ENCODE measurements at regions of chr17 and their contacts with region 1.

Region 1: DNA sequence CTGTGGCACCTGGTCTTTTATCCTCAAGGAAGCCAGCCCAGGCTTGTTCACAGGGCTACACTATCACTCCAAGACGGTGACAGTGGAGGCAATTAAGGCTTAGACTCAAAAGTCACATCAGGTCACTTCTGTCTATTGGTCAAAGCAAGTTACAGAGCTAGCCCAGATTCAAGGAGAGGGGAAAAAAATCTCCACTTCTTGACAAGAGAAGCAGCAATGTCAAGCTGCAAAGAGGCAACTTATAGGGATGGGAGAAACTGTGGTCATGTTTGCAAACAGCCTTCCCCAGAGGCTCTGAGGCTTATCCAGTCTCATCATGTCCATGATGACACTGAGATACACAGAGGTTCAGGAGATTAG is 31.6 kb downstream of the SERPINF1 start:
- DNase-seq: no peak
- ATAC-seq: no peak
- H3K4me3 ChIP-seq: no peak overlapping the region
- H3K27ac ChIP-seq: peak overlapping the region in 3 of 10 donors; percentile 10 to 67 (median 63)
- H3K4me1 ChIP-seq: peaks cover 3 to 43% (median 26%) of the 10 kb centered on the region in 9 donors
- H3K27me3 ChIP-seq: no peaks in the 10 kb centered on the region
- CTCF ChIP-seq: no peak

Region 2: DNA sequence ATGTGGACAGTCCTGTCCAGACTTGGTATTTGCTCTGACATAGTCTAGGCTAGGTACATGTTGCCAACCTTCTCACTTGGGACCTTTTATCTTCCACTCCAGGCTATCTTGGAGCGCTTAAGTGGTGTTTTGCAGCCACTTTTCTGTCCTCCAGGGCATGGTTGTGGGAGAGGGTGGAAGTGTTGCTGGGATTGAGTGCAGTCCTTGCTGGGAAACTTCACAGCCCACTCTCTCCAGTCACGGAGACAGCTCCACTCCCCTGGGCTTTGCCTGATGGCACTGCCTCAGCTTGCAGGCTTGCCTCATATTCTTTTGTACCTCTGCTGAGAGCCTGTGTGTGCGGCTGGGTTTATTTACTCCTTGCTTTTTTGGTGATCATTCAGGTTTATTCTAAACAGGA is 53.8 kb after region 1 on chr17:
- intact Hi-C with region 1: loop called in 3 of 10 experiments (anchors 5 to 10 kb)
- DNase-seq: peak; percentile 51 to 64
- ATAC-seq: peak; percentile 81 to 99 (median 93)
- H3K4me3 ChIP-seq: no peak overlapping the region
- H3K27ac ChIP-seq: peak overlapping the region; percentile 0 to 67 (median 46)
- H3K4me1 ChIP-seq: peaks cover 0 to 26% (median 10%) of the 10 kb centered on the region in 9 donors
- H3K27me3 ChIP-seq: no peaks in the 10 kb centered on the region
- CTCF ChIP-seq: no peak